Activated T-helper 1 cell treated with anti-CD3 and anti-CD28 coated beads, Interleukin-12 subunit alpha, Interleukin-12 subunit beta, Interleukin-2, Interleukin-4 antibody, amounts not matched to agents 30 ng/mL and 10 ng/mL and 1 ng/mL, durations not matched to agents 14 hours and 24 hours and 36 hours (primary cell): ENCODE measurements at regions of chr1 and their contacts with region 1.

Region 1: GRCh38 chr1:165630629-165631341 is at the start of gene MGST3:
- DNase-seq: peak; percentile 92
- H3K4me3 Mint-ChIP-seq: no peak within 1 kb of the TSS
- H3K27ac Mint-ChIP-seq: no peak within 1 kb of the TSS
- H3K4me1 Mint-ChIP-seq: peaks cover 13% of the 10 kb centered on the region
- H3K27me3 Mint-ChIP-seq: peaks cover 9% of the 10 kb centered on the region
- total RNA-seq, gene MGST3: 23.3 and 25.1 TPM in 2 replicates

Region 2: DNA sequence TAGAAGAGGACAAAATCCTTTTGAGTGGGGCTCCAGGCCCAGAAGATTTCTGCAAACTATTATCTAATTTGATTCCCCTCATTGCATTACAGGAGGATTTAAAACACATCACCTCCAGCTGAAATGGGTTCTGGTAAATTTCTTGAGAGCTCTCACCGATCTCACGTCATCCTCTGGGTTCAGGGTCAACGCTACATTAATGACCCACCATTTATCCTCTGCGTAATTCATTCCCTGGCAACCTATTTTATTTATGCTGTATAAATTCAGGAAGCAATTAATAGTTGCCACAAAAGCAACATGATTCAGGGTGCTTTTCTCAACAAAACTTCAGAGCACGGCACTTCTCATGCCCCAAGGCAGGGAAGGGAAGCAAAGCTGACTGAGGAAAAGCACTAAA is 313.2 kb before region 1 on chr1:
- intact Hi-C with region 1: no loop called
- DNase-seq: no peak
- H3K4me3 Mint-ChIP-seq: no peak overlapping the region
- H3K27ac Mint-ChIP-seq: no peak overlapping the region
- H3K4me1 Mint-ChIP-seq: no peaks in the 10 kb centered on the region
- H3K27me3 Mint-ChIP-seq: peaks cover 9% of the 10 kb centered on the region

Region 3: GRCh38 chr1:165392634-165393571 is 237.9 kb before region 1 on chr1:
- intact Hi-C with region 1: loop called (anchors 1 kb)
- DNase-seq: peak; percentile 90
- H3K4me3 Mint-ChIP-seq: peak overlapping the region; percentile 58
- H3K27ac Mint-ChIP-seq: peak overlapping the region; percentile 92
- H3K4me1 Mint-ChIP-seq: peaks cover 25% of the 10 kb centered on the region
- H3K27me3 Mint-ChIP-seq: peaks cover 80% of the 10 kb centered on the region

Region 4: DNA sequence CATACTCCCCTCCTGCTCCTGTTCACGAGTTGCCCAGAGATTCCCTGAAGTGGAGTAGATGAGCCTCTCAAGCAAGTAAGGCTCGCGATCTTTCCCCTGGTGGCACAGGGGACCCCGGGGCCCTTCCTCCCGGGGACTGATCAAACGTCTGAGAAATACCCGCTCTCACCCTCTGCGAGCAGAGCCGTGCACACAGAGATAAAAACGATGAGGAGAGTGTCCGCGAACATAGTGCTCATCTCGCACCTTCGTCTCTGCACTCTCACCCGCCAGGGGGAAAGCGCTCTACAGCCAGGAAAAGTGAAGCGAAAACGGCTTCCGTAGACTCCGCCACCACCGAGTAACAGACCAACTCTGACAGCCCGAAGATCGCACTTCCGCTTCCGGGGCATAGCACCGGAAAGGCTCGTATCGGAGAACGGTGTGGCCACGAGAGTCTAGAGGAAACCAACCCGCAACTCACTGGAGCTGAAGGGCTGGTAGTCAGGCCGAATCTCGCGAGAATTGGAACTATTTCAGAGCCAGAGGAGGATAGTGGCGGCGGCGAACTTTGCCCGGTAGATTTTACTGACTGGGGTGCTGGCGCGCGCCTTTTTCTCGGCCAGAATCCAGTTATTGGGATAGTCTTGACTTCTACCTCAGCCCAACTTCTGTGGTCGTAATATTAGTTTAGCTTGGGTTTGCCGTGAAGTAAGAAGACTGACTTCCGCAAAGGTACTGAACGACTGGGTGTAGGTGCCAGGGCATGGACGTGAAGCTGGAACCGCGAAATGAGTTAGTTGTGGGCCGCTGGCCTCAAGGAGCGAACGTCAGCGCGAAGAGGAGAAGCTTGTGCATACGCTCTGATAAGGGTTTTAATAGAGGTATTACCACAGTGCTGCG is 138.0 kb after region 1 on chr1 and contains the start of gene TMCO1:
- intact Hi-C with region 1: loop called (anchors 1 kb)
- DNase-seq: peak; percentile 94
- H3K4me3 Mint-ChIP-seq: peak within 1 kb of the TSS; percentile 99
- H3K27ac Mint-ChIP-seq: peak within 1 kb of the TSS; percentile 100
- H3K4me1 Mint-ChIP-seq: peaks cover 53% of the 10 kb centered on the region
- H3K27me3 Mint-ChIP-seq: no peaks in the 10 kb centered on the region
- total RNA-seq, gene TMCO1: 97.1 and 102 TPM in 2 replicates

Region 5: GRCh38 chr1:165827268-165828102 is 196.7 kb after region 1 on chr1 and contains the start of gene UCK2:
- intact Hi-C with region 1: loop called (anchors 2 kb)
- DNase-seq: peak; percentile 51
- H3K4me3 Mint-ChIP-seq: peak within 1 kb of the TSS; percentile 96
- H3K27ac Mint-ChIP-seq: peak within 1 kb of the TSS; percentile 90
- H3K4me1 Mint-ChIP-seq: peaks cover 22% of the 10 kb centered on the region
- H3K27me3 Mint-ChIP-seq: peaks cover 15% of the 10 kb centered on the region
- total RNA-seq, gene UCK2: 109 and 112 TPM in 2 replicates

Region 6: DNA sequence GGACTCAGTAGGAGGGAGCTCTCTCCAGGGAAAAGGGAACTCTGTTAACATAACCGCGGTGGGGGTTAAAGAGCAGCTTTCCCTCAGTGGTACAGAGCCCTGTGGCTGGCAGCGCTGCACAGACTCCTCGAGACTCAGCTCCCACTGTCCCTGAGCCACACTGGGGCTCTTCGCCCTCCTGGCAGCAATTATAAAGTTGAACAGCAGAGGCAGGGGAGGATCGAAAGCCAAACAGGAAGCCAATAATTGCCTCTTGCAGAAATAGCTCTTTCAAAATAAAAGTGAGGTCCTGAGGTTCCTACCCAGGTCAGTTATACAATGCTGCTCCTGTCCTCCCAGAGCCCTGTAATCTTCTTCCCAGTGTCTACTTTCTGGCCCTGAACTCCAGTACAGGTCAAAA is 459.0 kb after region 1 on chr1:
- intact Hi-C with region 1: loop called (anchors 10 kb)
- DNase-seq: no peak
- H3K4me3 Mint-ChIP-seq: no peak overlapping the region
- H3K27ac Mint-ChIP-seq: no peak overlapping the region
- H3K4me1 Mint-ChIP-seq: peaks cover 5% of the 10 kb centered on the region
- H3K27me3 Mint-ChIP-seq: no peaks in the 10 kb centered on the region

Region 7: GRCh38 chr1:166489670-166490436 is 859.1 kb after region 1 on chr1:
- intact Hi-C with region 1: loop called (anchors 2 kb)
- DNase-seq: peak; percentile 40
- H3K4me3 Mint-ChIP-seq: no peak overlapping the region
- H3K27ac Mint-ChIP-seq: no peak overlapping the region
- H3K4me1 Mint-ChIP-seq: peaks cover 15% of the 10 kb centered on the region
- H3K27me3 Mint-ChIP-seq: no peaks in the 10 kb centered on the region

Region 8: GRCh38 chr1:166838766-166839599 is 1208.2 kb after region 1 on chr1 and contains the start of gene POGK:
- intact Hi-C with region 1: loop called (anchors 2 kb)
- DNase-seq: peak; percentile 84
- H3K4me3 Mint-ChIP-seq: peak within 1 kb of the TSS; percentile 94
- H3K27ac Mint-ChIP-seq: peak within 1 kb of the TSS; percentile 97
- H3K4me1 Mint-ChIP-seq: peaks cover 64% of the 10 kb centered on the region
- H3K27me3 Mint-ChIP-seq: no peaks in the 10 kb centered on the region
- total RNA-seq, gene POGK: 51.4 and 54.1 TPM in 2 replicates